ENCODE measurements at regions of chr4 and their contacts with region 1.

Region 1: GRCh38 chr4:89898304-89898716 is 3.7 kb downstream of the MMRN1 start:
- DNase-seq: no peak
- ATAC-seq: peak; percentile 24 to 40 (median 25)
- H3K4me3 ChIP-seq: no peak overlapping the region
- H3K4me3 Mint-ChIP-seq: no peak overlapping the region
- H3K27ac ChIP-seq: no peak overlapping the region
- H3K27ac Mint-ChIP-seq: no peak overlapping the region
- H3K4me1 ChIP-seq: peaks cover 10% of the 10 kb centered on the region
- H3K4me1 Mint-ChIP-seq: peaks cover 11 to 12% of the 10 kb centered on the region in 2 donors
- H3K27me3 ChIP-seq: peaks cover 2% of the 10 kb centered on the region
- H3K27me3 Mint-ChIP-seq: no peaks in the 10 kb centered on the region
- CTCF ChIP-seq: no peak

Region 2: GRCh38 chr4:89158884-89159503 is 739.3 kb before region 1 on chr4:
- intact Hi-C with region 1: loop called (anchors 2 kb)
- DNase-seq: peak in 1 of 2 donors; percentile 61
- ATAC-seq: peak; percentile 59 to 76 (median 62)
- H3K4me3 ChIP-seq: no peak overlapping the region
- H3K4me3 Mint-ChIP-seq: no peak overlapping the region
- H3K27ac ChIP-seq: no peak overlapping the region
- H3K27ac Mint-ChIP-seq: no peak overlapping the region
- H3K4me1 ChIP-seq: no peaks in the 10 kb centered on the region
- H3K4me1 Mint-ChIP-seq: no peaks in the 10 kb centered on the region
- H3K27me3 ChIP-seq: no peaks in the 10 kb centered on the region
- H3K27me3 Mint-ChIP-seq: peaks cover 7 to 13% of the 10 kb centered on the region in 2 donors
- CTCF ChIP-seq: peak; percentile 74

Region 3: GRCh38 chr4:89226665-89227574 is 671.4 kb before region 1 on chr4:
- intact Hi-C with region 1: loop called (anchors 2 kb)
- DNase-seq: peak; percentile 58 to 89
- ATAC-seq: peak; percentile 87 to 98 (median 98)
- H3K4me3 ChIP-seq: no peak overlapping the region
- H3K4me3 Mint-ChIP-seq: no peak overlapping the region
- H3K27ac ChIP-seq: no peak overlapping the region
- H3K27ac Mint-ChIP-seq: no peak overlapping the region
- H3K4me1 ChIP-seq: no peaks in the 10 kb centered on the region
- H3K4me1 Mint-ChIP-seq: peaks cover 5 to 6% of the 10 kb centered on the region in 2 donors
- H3K27me3 ChIP-seq: no peaks in the 10 kb centered on the region
- H3K27me3 Mint-ChIP-seq: no peaks in the 10 kb centered on the region
- CTCF ChIP-seq: peak; percentile 84

Measured in natural killer cell (primary cell).